Common myeloid progenitor, CD34-positive (primary cell): ENCODE measurements at regions of chr11 and their contacts with region 1.

Region 1: GRCh38 chr11:57249384-57250319 is 12.6 kb upstream of the APLNR start:
- DNase-seq: peak; percentile 51 to 76 (median 66)
- H3K4me3 ChIP-seq: no peak overlapping the region
- H3K27ac ChIP-seq: no peak overlapping the region
- H3K4me1 ChIP-seq: peaks cover 0 to 14% (median 2%) of the 10 kb centered on the region in 4 experiments
- H3K27me3 ChIP-seq: peaks cover 0 to 51% (median 20%) of the 10 kb centered on the region in 5 experiments

Region 2: GRCh38 chr11:57111619-57112018 is 138.0 kb before region 1 on chr11:
- CTCF ChIA-PET with region 1: interaction called, 104 read pairs
- POLR2A ChIA-PET with region 1: no interaction called
- DNase-seq: no peak
- H3K4me3 ChIP-seq: no peak overlapping the region
- H3K27ac ChIP-seq: no peak overlapping the region
- H3K4me1 ChIP-seq: no peaks in the 10 kb centered on the region
- H3K27me3 ChIP-seq: peaks cover 0 to 30% (median 6%) of the 10 kb centered on the region in 5 experiments

Region 3: GRCh38 chr11:57124917-57125316 is 124.7 kb before region 1 on chr11:
- CTCF ChIA-PET with region 1: interaction called, 104 read pairs
- POLR2A ChIA-PET with region 1: no interaction called
- DNase-seq: no peak
- H3K4me3 ChIP-seq: no peak overlapping the region
- H3K27ac ChIP-seq: no peak overlapping the region
- H3K4me1 ChIP-seq: no peaks in the 10 kb centered on the region
- H3K27me3 ChIP-seq: peaks cover 5 to 86% (median 37%) of the 10 kb centered on the region in 5 experiments

Region 4: GRCh38 chr11:57148621-57149020 is 101.0 kb before region 1 on chr11:
- CTCF ChIA-PET with region 1: interaction called, 12 read pairs
- POLR2A ChIA-PET with region 1: no interaction called
- DNase-seq: no peak
- H3K4me3 ChIP-seq: no peak overlapping the region
- H3K27ac ChIP-seq: no peak overlapping the region
- H3K4me1 ChIP-seq: no peaks in the 10 kb centered on the region
- H3K27me3 ChIP-seq: peaks cover 3 to 88% (median 52%) of the 10 kb centered on the region in 5 experiments

Region 5: DNA sequence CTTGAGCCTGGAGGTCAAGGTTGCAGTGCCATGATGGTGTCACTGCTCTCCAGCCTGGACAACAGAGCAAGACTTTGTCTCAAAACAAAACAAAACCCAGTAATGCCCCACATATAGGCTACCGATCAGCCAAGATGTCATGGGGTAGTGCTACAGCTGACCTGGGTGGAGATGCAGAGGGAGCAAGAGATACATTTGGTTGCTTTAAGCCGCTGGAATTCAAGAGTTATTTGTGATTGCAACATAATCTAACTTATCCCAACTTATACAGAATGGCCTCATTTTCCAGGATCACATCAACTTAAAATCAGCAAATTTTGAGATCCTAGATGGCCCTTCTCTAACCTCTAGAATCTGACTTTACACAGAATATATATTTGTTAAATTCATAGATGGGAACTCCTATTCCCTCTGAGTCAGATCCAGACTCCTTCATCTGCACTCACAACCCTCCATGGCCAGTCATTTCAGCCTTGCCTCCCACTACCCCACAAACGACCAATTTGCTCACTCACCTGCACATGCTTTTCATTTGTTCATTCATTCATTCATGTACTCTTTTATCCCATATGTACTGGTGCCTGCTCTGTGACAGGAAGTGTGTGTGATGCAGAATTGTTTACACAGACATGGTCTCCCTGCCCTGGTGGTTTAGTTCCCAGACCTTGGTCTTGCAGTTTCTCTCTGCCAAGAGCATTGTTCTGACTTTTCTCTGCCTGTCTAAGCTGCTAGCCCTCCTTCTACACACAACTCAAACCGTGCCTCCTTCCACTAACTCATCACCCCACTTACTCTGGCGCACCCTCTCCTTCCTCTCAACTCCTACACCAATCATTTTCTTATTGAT is 11.5 kb after region 1 on chr11:
- CTCF ChIA-PET with region 1: interaction called, 11 read pairs
- POLR2A ChIA-PET with region 1: no interaction called
- DNase-seq: no peak
- H3K4me3 ChIP-seq: no peak overlapping the region
- H3K27ac ChIP-seq: no peak overlapping the region
- H3K4me1 ChIP-seq: no peaks in the 10 kb centered on the region
- H3K27me3 ChIP-seq: peaks cover 0 to 20% (median 2%) of the 10 kb centered on the region in 5 experiments

Region 6: DNA sequence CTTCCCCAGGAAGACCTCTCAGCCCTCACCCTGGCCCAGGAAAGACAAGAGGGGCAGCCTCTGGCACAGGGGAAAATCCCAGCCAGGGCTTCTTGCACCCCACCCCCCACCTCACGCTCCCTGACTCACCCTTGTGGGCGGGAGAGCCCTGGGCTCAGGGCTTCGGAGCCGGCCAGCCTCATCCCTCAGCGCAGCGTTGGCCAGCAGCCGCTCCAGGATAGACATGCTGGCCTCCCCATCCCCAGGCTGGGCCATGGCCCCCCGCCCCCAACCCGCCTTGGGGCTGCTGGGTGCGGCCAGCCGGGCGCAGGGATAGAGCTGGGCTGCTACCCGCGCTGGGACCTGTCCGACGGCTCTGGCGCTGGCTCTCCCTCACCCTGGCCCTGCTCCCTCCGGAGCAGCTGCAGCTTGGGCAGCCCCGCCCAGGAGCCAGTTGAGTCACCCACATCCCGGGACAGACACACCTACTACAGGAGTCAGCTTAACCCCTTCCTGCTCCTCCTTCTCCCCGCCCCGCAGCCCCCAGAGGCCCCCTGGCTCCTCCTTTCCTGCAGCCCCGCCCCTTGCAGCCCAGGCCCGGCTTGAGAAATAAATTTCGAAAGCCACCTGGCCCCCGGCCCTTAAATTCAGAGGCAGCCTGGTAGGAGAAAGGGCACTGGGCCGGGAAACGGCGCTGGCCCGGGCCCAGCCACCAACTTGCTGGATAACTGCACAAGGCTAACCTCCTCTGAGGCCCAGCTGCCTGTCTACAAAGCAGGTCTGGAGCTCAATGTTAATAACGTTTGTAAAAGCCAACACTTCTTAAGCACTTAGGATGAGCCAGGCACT is 61.7 kb after region 1 on chr11:
- CTCF ChIA-PET with region 1: no interaction called
- POLR2A ChIA-PET with region 1: no interaction called
- DNase-seq: peak; percentile 76 to 82 (median 79)
- H3K4me3 ChIP-seq: peak overlapping the region in 6 of 7 experiments; percentile 42 to 76 (median 52)
- H3K27ac ChIP-seq: no peak overlapping the region
- H3K4me1 ChIP-seq: peaks cover 9 to 47% (median 30%) of the 10 kb centered on the region in 4 experiments
- H3K27me3 ChIP-seq: no peaks in the 10 kb centered on the region